ENCODE measurements at regions of chr13 and their contacts with region 1.

Region 1: GRCh38 chr13:29508130-29508875 is 87.2 kb downstream of the SLC7A1 start:
- DNase-seq: peak; percentile 49 to 83 (median 68)
- ATAC-seq: peak; percentile 75
- H3K4me3 ChIP-seq: no peak overlapping the region
- H3K4me3 Mint-ChIP-seq: no peak overlapping the region
- H3K27ac ChIP-seq: no peak overlapping the region
- H3K27ac Mint-ChIP-seq: no peak overlapping the region
- H3K4me1 ChIP-seq: no peaks in the 10 kb centered on the region
- H3K4me1 Mint-ChIP-seq: no peaks in the 10 kb centered on the region
- H3K27me3 ChIP-seq: no peaks in the 10 kb centered on the region
- H3K27me3 Mint-ChIP-seq: peaks cover 11% of the 10 kb centered on the region
- CTCF ChIP-seq: peak; percentile 88

Region 2: GRCh38 chr13:29707876-29708543 is 199.7 kb after region 1 on chr13:
- CTCF ChIA-PET with region 1: interaction called, 13 read pairs
- POLR2A ChIA-PET with region 1: no interaction called
- intact Hi-C with region 1: loop called (anchors 1 kb)
- DNase-seq: peak; percentile 10 to 61 (median 34)
- ATAC-seq: no peak
- H3K4me3 ChIP-seq: no peak overlapping the region
- H3K4me3 Mint-ChIP-seq: no peak overlapping the region
- H3K27ac ChIP-seq: no peak overlapping the region
- H3K27ac Mint-ChIP-seq: no peak overlapping the region
- H3K4me1 ChIP-seq: no peaks in the 10 kb centered on the region
- H3K4me1 Mint-ChIP-seq: no peaks in the 10 kb centered on the region
- H3K27me3 ChIP-seq: peaks cover 1% of the 10 kb centered on the region in 2 experiments
- H3K27me3 Mint-ChIP-seq: peaks cover 12% of the 10 kb centered on the region
- CTCF ChIP-seq: no peak

Measured in CD4-positive, alpha-beta T cell (primary cell).